Spleen (tissue), 13 donors: ENCODE measurements at regions of chr22 and their contacts with region 1.

Region 1: GRCh38 chr22:20156611-20157429 is 6.0 kb upstream of the CCDC188 start:
- DNase-seq: peak; percentile 95
- H3K4me3 ChIP-seq: no peak overlapping the region
- H3K27ac ChIP-seq: peak overlapping the region in 2 of 8 donors; percentile 1 to 3
- H3K4me1 ChIP-seq: peaks cover 4 to 49% (median 24%) of the 10 kb centered on the region in 6 donors
- H3K27me3 ChIP-seq: peaks cover 0 to 58% (median 0%) of the 10 kb centered on the region in 7 donors
- CTCF ChIP-seq: peak; percentile 97 to 100 (median 99)
- POLR2A ChIP-seq: no peak

Region 2: GRCh38 chr22:20268279-20269012 is 111.6 kb after region 1 on chr22 and contains the start of gene RTN4R:
- intact Hi-C with region 1: loop called (anchors 5 kb)
- DNase-seq: peak; percentile 90
- H3K4me3 ChIP-seq: peak within 1 kb of the TSS; percentile 25 to 73 (median 48)
- H3K27ac ChIP-seq: peak within 1 kb of the TSS in 6 of 8 donors; percentile 39 to 64 (median 50)
- H3K4me1 ChIP-seq: peaks cover 7 to 51% (median 31%) of the 10 kb centered on the region in 6 donors
- H3K27me3 ChIP-seq: peaks cover 0 to 16% (median 10%) of the 10 kb centered on the region in 7 donors
- CTCF ChIP-seq: peak in 10 of 11 experiments; percentile 31 to 88 (median 82)
- POLR2A ChIP-seq: no peak
- total RNA-seq, gene RTN4R: 4.5 to 11.8 (median 7.0) TPM

Region 3: GRCh38 chr22:20283674-20284066 is 126.8 kb after region 1 on chr22:
- intact Hi-C with region 1: loop called (anchors 2 kb)
- DNase-seq: no peak
- H3K4me3 ChIP-seq: no peak overlapping the region
- H3K27ac ChIP-seq: no peak overlapping the region
- H3K4me1 ChIP-seq: no peaks in the 10 kb centered on the region
- H3K27me3 ChIP-seq: no peaks in the 10 kb centered on the region
- CTCF ChIP-seq: no peak
- POLR2A ChIP-seq: no peak